Gastrocnemius medialis (tissue), 4 donors: ENCODE measurements at regions of chr11 and their contacts with region 1.

Region 1: GRCh38 chr11:61627567-61628445 is 46.9 kb upstream of the SYT7 start:
- DNase-seq: peak; percentile 48 to 67
- ATAC-seq: peak; percentile 60
- H3K4me3 ChIP-seq: no peak overlapping the region
- H3K27ac ChIP-seq: peak overlapping the region; percentile 70 to 88 (median 84)
- H3K4me1 ChIP-seq: peaks cover 26 to 44% of the 10 kb centered on the region in 2 donors
- H3K27me3 ChIP-seq: no peaks in the 10 kb centered on the region
- CTCF ChIP-seq: peak; percentile 50 to 77 (median 70)
- POLR2A ChIP-seq: no peak

Region 2: DNA sequence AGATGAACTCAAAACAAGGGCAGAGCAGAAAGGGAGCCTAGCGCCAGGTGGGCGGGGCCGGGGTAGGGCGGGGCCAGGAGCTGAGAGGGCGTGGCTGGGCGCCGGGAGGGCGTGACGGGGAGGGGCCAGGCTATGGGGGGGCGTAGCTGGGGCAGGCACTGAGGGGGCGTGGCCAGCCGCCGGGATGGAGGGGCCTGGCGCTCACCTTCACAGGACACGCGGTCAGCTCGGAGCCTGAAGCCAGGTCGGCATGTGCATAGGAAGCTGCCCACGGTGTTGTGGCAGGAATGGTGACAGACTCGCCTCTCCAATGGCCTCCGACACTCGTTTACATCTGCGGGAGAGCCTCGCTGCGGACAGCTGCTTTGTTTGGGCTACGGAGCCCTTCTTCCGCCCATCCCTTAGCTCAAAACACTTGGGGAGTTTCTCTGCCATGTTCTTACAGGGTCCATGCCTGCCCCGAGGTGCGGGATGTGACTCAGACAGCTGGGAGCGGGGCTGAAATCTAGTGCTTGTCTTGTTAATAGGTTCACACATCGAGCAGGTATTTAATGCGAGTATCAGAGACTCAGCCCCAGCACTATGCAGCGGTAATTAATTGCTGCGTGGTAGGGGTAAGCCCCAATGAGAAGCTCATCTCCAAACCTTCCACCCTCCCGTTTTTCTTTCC is 346.1 kb before region 1 on chr11:
- in situ Hi-C with region 1: no loop called
- intact Hi-C with region 1: no loop called
- DNase-seq: no peak
- ATAC-seq: no peak
- H3K4me3 ChIP-seq: no peak overlapping the region
- H3K27ac ChIP-seq: no peak overlapping the region
- H3K4me1 ChIP-seq: no peaks in the 10 kb centered on the region
- H3K27me3 ChIP-seq: no peaks in the 10 kb centered on the region
- CTCF ChIP-seq: no peak
- POLR2A ChIP-seq: no peak

Region 3: GRCh38 chr11:61315260-61315659 is 312.5 kb before region 1 on chr11:
- in situ Hi-C with region 1: no loop called
- intact Hi-C with region 1: no loop called
- DNase-seq: no peak
- ATAC-seq: no peak
- H3K4me3 ChIP-seq: no peak overlapping the region
- H3K27ac ChIP-seq: no peak overlapping the region
- H3K4me1 ChIP-seq: no peaks in the 10 kb centered on the region
- H3K27me3 ChIP-seq: no peaks in the 10 kb centered on the region
- CTCF ChIP-seq: no peak
- POLR2A ChIP-seq: no peak

Region 4: GRCh38 chr11:61460474-61460881 is 167.3 kb before region 1 on chr11:
- in situ Hi-C with region 1: loop called in 1 of 4 experiments (anchors 25 kb)
- intact Hi-C with region 1: no loop called
- DNase-seq: peak in 1 of 2 donors; percentile 67
- ATAC-seq: peak; percentile 45 to 79
- H3K4me3 ChIP-seq: no peak overlapping the region
- H3K27ac ChIP-seq: peak overlapping the region; percentile 21 to 38 (median 32)
- H3K4me1 ChIP-seq: peaks cover 9 to 14% of the 10 kb centered on the region in 2 donors
- H3K27me3 ChIP-seq: no peaks in the 10 kb centered on the region
- CTCF ChIP-seq: no peak
- POLR2A ChIP-seq: no peak